Activated CD8-positive, alpha-beta T cell treated with anti-CD3 and anti-CD28 coated beads, Interleukin-2, amount 10 ng/mL, durations not matched to agents 7 days and 5 days (primary cell): ENCODE measurements at regions of chr1 and their contacts with region 1.

Region 1: DNA sequence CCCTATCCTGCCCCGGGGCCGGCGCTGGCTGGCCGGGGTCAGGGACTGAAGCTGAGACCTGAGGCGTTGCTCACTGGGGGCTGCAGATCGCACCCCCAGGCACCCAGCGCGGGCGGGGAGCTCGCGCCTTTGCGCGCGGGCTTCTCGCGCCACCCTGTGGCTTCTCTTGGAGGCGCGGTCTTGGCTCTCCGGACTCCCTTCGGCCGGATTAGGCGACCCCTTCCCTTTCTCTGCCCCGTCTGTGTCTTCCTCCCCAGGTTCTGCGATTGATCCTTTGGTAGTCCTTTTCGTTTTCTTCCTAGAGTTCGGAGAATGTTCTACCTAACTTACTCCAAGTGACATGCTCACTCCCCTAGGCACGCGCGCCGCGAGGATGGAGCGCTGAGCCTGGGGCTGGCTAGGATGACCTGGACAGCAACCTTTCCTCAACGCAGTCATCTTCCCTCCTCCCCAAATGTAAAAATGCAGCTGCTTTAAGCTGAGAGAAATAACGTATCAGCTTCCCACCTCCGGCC is 495 bp upstream of the NTRK1 start:
- DNase-seq: peak; percentile 68
- ATAC-seq: peak; percentile 62
- H3K4me3 Mint-ChIP-seq: peak overlapping the region; percentile 72
- H3K27ac Mint-ChIP-seq: peak overlapping the region; percentile 54
- H3K4me1 Mint-ChIP-seq: peaks cover 56% of the 10 kb centered on the region
- H3K27me3 Mint-ChIP-seq: peaks cover 39% of the 10 kb centered on the region

Region 2: GRCh38 chr1:156456622-156457465 is 403.3 kb before region 1 on chr1:
- CTCF ChIA-PET with region 1: no interaction called
- POLR2A ChIA-PET with region 1: no interaction called
- DNase-seq: peak; percentile 97
- ATAC-seq: peak; percentile 88
- H3K4me3 Mint-ChIP-seq: peak overlapping the region; percentile 84
- H3K27ac Mint-ChIP-seq: peak overlapping the region; percentile 95
- H3K4me1 Mint-ChIP-seq: peaks cover 18% of the 10 kb centered on the region
- H3K27me3 Mint-ChIP-seq: peaks cover 15% of the 10 kb centered on the region

Region 3: GRCh38 chr1:156705918-156706656 is 154.1 kb before region 1 on chr1:
- CTCF ChIA-PET with region 1: interaction called, 15 read pairs
- POLR2A ChIA-PET with region 1: no interaction called
- DNase-seq: peak; percentile 70
- ATAC-seq: peak; percentile 65
- H3K4me3 Mint-ChIP-seq: peak overlapping the region; percentile 71
- H3K27ac Mint-ChIP-seq: no peak overlapping the region
- H3K4me1 Mint-ChIP-seq: peaks cover 28% of the 10 kb centered on the region
- H3K27me3 Mint-ChIP-seq: peaks cover 33% of the 10 kb centered on the region

Region 4: DNA sequence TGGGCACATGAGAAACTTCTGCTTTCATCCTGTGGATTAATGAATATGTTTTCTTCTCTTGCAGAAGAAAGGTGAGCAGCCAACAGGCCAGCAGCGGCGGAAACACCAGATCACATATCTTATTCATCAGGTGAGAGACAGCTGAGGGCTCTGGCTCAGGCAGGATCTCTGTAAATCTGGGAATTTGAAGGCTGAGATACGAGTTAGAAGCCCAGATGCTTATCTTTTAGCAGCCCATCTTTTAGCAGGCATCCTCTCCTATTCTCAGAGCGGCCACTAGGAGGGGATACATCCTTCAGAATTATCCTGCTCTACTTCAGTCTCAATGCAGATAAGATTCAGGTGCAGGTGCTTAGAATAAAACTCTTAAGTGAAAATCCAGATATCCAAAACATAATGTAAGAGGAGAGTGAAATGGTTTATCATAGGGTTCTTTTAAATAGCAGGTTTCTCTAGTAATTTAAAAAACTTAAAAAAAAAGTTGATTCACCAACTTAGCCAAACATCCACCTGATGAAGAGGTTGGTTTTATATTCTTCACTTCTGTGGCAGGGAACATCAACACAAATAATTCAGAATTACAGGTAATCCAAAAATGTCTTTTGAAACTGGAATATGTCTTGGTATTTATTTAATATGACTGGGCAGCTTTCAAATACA is 62.8 kb before region 1 on chr1:
- CTCF ChIA-PET with region 1: interaction called, 304 read pairs
- POLR2A ChIA-PET with region 1: interaction called, 115 read pairs
- DNase-seq: peak; percentile 81
- ATAC-seq: peak; percentile 76
- H3K4me3 Mint-ChIP-seq: no peak overlapping the region
- H3K27ac Mint-ChIP-seq: no peak overlapping the region
- H3K4me1 Mint-ChIP-seq: peaks cover 24% of the 10 kb centered on the region
- H3K27me3 Mint-ChIP-seq: no peaks in the 10 kb centered on the region

Region 5: GRCh38 chr1:156821801-156822200 is 38.4 kb before region 1 on chr1:
- CTCF ChIA-PET with region 1: interaction called, 164 read pairs
- POLR2A ChIA-PET with region 1: interaction called, 20 read pairs
- DNase-seq: no peak
- ATAC-seq: peak; percentile 12
- H3K4me3 Mint-ChIP-seq: no peak overlapping the region
- H3K27ac Mint-ChIP-seq: no peak overlapping the region
- H3K4me1 Mint-ChIP-seq: peaks cover 39% of the 10 kb centered on the region
- H3K27me3 Mint-ChIP-seq: peaks cover 2% of the 10 kb centered on the region

Region 6: DNA sequence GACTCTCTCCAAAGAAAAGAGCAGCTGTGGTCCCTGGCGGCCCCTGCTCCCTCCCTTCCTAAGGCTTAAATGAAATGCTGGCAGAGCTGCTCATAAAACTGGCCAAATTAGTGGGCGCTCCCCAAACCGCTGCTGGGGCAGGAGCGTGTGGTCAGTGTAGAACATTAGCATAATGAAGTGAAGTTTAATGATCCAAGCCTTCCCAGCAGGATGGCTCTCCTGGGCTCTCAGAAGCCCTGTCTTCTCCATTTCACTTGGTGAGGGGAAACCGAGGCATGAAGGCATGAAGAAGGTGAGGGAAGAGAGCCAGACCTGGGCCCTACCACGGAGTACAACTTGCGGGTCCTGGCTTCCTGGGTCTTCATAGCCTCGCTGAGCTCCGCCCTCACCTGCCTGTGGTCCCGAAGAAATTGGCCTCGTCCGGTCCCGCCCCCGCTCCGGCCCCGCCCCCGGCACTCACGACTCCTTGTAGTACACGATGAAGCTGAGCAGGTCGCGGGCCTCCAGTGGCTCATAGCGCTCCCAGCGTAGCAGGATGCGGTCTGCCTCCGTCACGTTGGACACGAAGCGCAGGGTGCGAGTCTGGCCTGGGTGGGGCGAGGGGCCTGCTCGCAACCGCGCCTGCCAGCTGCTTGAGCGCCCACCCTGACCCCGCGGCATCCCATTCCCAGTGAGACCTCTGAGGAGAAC is 11.6 kb before region 1 on chr1:
- CTCF ChIA-PET with region 1: interaction called, 125 read pairs
- POLR2A ChIA-PET with region 1: interaction called, 10 read pairs
- DNase-seq: peak; percentile 93
- ATAC-seq: peak; percentile 89
- H3K4me3 Mint-ChIP-seq: peak overlapping the region; percentile 56
- H3K27ac Mint-ChIP-seq: peak overlapping the region; percentile 86
- H3K4me1 Mint-ChIP-seq: peaks cover 49% of the 10 kb centered on the region
- H3K27me3 Mint-ChIP-seq: peaks cover 30% of the 10 kb centered on the region

Region 7: GRCh38 chr1:156927215-156928042 is 67.3 kb after region 1 on chr1:
- CTCF ChIA-PET with region 1: interaction called, 16 read pairs
- POLR2A ChIA-PET with region 1: no interaction called
- DNase-seq: peak; percentile 81
- ATAC-seq: peak; percentile 82
- H3K4me3 Mint-ChIP-seq: peak overlapping the region; percentile 20
- H3K27ac Mint-ChIP-seq: no peak overlapping the region
- H3K4me1 Mint-ChIP-seq: peaks cover 38% of the 10 kb centered on the region
- H3K27me3 Mint-ChIP-seq: peaks cover 77% of the 10 kb centered on the region